GM10248 (cell line): ENCODE measurements at regions of chr3 and their contacts with region 1.

Region 1: DNA sequence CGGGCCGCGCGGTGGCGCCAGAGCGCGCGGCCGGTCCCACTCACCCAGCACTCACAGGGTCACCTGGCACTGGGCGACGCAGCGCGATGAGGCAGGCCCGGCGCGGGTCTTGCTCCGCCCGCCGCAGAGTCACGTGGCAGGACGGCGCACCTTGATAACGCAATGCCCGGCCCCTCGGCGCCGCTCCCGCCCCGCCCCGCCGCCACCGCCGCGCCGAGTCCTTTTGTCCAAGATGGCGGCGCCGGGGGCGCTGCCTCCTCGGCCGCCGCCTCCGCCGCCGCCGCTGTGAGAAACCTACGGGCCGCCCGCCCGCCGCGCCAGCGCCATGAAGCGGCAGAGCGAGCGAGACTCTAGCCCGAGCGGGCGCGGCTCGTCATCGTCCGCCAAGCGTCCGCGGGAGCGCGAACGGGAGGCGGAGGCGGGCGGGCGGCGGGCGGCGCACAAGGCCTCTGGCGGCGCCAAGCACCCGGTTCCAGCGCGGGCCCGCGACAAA is at the start of gene RBM15B:
- DNase-seq: peak; percentile 97
- CTCF ChIP-seq: peak; percentile 95

Region 2: DNA sequence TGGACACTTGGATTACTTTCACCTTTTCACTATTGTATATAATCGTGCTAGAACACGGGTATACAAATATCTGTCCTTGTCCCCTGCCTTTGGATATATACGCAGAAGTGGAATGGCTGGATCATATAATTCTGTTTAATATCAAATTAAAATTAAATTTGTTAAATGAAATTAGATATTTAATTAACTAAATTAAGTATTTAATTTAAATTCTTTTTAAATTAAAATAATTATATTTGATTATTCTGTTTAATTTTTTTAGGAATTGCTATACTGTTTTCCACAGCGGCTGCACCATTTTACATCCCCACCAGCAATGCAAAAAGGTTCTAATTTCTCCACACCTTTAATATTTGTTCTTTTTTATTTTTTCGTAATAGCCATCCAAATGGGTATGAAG is 632.1 kb before region 1 on chr3:
- CTCF ChIA-PET with region 1: no interaction called
- POLR2A ChIA-PET with region 1: no interaction called
- DNase-seq: no peak
- CTCF ChIP-seq: no peak

Region 3: GRCh38 chr3:51379301-51379700 is 11.8 kb before region 1 on chr3:
- CTCF ChIA-PET with region 1: interaction called, 35 read pairs
- POLR2A ChIA-PET with region 1: no interaction called
- DNase-seq: no peak
- CTCF ChIP-seq: no peak

Region 4: DNA sequence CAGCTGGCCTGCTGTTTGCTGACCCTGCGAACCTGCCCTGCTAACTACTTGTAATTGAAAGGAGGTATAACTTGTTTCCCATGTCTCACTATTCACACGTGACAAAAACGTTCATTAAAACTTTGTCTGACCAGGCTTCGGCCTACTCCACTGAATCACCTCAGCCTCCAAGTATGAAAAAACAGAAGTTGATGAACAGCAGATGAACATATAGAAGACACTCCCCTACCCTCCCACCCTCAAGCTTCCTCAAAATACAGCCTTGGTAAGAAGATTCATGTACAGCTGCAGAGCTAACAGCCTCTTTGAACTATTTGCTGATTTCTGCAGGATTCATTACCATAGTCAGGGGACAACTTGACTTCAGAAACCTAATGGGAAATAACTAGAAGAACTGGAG is 10.6 kb after region 1 on chr3:
- CTCF ChIA-PET with region 1: interaction called, 29 read pairs
- POLR2A ChIA-PET with region 1: no interaction called
- DNase-seq: no peak
- CTCF ChIP-seq: no peak

Region 5: GRCh38 chr3:51434746-51435327 is 43.7 kb after region 1 on chr3:
- CTCF ChIA-PET with region 1: interaction called, 21 read pairs
- POLR2A ChIA-PET with region 1: no interaction called
- DNase-seq: peak; percentile 57
- CTCF ChIP-seq: peak; percentile 55

Region 6: DNA sequence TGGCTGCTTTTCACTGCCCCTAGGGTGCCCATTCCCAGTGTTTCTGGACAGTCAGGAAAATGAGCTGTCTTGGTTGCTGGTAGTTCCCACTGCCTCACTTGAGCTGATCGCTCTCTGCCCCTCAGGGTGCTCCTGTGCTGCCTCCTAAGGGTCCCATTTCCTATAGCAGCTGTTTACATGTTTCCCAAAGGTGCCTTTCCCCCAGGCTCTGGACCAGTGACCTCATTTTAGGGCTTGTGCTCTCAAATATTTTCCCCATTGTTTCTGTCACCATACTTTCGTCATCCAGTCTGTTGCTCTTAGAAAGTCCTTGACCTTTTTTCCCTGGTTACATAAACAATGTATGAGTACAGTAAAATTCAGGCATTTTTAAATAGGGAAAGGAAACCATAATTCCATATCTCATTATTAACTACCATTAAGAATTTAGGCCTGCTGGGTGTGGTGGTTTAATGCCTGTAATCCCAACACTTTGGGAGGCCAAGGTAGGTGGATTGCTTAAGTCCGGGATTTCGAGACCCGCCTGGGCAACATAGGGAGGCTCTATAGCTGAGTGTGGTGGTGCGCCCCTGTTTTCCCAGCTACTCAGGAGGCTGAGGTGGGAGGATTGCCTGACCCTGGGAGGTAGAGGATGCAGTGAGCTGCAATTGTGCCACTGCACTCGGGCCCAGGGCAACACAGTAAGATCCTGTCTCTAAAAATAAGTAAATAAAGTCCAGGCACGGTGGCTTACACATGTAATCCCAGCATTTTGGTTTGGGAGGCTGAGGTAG is 159.1 kb after region 1 on chr3:
- CTCF ChIA-PET with region 1: no interaction called
- POLR2A ChIA-PET with region 1: no interaction called
- DNase-seq: no peak
- CTCF ChIP-seq: no peak

Region 7: GRCh38 chr3:51605938-51606337 is 214.8 kb after region 1 on chr3:
- CTCF ChIA-PET with region 1: no interaction called
- POLR2A ChIA-PET with region 1: no interaction called
- DNase-seq: no peak
- CTCF ChIP-seq: no peak

Region 8: GRCh38 chr3:51799879-51800749 is 409.0 kb after region 1 on chr3:
- CTCF ChIA-PET with region 1: interaction called, 18 read pairs
- POLR2A ChIA-PET with region 1: no interaction called
- DNase-seq: peak; percentile 46
- CTCF ChIP-seq: peak; percentile 81